GM12878 (cell line): ENCODE measurements at regions of chr18 and their contacts with region 1.

Region 1: GRCh38 chr18:42126586-42126985 is 171.6 kb downstream of the PIK3C3 start:
- DNase-seq: no peak
- ATAC-seq: no peak
- H3K4me3 ChIP-seq: no peak overlapping the region
- H3K27ac ChIP-seq: no peak overlapping the region
- H3K4me1 ChIP-seq: no peaks in the 10 kb centered on the region
- H3K27me3 ChIP-seq: no peaks in the 10 kb centered on the region
- CTCF ChIP-seq: no peak
- EP300 ChIP-seq: no peak
- POLR2A ChIP-seq: no peak
- RAD21 ChIP-seq: no peak

Region 2: DNA sequence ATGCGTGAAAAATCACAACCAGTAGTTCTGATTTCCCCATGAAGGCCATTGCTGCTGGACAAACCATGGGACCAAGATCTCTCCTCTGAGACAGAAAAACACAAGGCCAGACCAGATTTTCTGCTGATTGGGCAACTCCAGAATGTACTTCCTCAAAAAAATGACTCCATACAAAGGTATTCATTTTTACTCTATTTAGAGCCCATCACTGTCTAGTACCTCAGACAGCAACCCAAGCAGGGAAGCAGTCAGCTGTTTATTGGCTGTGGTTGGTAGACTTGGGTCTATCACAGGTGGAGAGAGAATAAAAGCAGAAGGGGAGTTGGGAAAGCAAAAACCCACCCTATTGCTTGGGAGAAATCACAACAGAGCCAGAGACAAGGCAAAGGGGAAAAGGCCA is 48.3 kb after region 1 on chr18:
- CTCF ChIA-PET with region 1: no interaction called
- POLR2A ChIA-PET with region 1: no interaction called
- RAD21 ChIA-PET with region 1: no interaction called
- SMC1A ChIA-PET with region 1: no interaction called
- in situ Hi-C with region 1: no loop called
- intact Hi-C with region 1: loop called (anchors 2 kb)
- DNase-seq: no peak
- ATAC-seq: peak; percentile 54
- H3K4me3 ChIP-seq: no peak overlapping the region
- H3K27ac ChIP-seq: no peak overlapping the region
- H3K4me1 ChIP-seq: no peaks in the 10 kb centered on the region
- H3K27me3 ChIP-seq: no peaks in the 10 kb centered on the region; a peak in 1 of 4 replicates
- CTCF ChIP-seq: no peak
- EP300 ChIP-seq: no peak
- POLR2A ChIP-seq: no peak
- RAD21 ChIP-seq: no peak